Calu3 (cell line): ENCODE measurements at regions of chr9 and their contacts with region 1.

Region 1: DNA sequence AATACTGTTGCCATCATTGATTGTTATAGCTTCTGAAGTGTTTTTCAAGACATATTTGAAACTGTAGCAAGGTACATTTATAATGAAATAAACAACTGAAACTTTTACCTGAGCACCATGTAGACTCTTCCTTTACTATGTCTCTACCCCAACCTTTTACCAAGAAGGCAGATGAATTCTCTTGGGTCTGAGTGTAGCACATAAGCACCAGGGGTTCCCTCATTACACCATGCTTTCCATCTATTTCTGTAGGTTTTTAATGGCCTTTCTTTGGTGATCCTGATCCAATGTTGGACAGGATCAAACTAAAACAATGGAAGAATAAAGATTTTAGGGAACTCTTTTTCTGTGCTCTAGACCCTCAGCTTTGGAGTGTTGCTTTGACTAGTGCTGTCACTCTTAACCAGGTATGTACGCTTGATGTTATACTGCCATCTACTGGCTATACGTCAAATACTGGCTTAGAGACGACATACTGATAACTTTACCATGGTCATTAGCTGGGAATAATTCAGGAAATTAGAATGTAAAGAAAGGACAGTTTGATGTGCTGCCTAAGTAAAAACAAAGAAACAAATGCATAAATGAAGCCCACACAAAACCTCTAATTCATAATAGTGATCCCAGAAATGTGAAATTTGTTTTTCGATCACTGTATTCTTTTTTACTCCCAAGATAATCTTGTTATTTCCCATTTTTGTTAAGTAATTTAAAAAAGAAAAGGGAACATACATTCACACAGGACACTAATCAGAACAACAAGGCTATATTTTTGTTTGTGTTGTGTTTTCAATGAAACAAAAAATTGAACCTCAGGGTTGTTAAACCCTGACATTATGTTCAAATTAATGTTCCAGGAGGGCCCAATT is 30.7 kb downstream of the IFNW1 start:
- DNase-seq: peak; percentile 26
- H3K4me3 Mint-ChIP-seq: no peak overlapping the region
- H3K27ac Mint-ChIP-seq: no peak overlapping the region
- H3K4me1 Mint-ChIP-seq: no peaks in the 10 kb centered on the region
- H3K27me3 Mint-ChIP-seq: no peaks in the 10 kb centered on the region
- CTCF ChIP-seq: peak; percentile 42

Region 2: DNA sequence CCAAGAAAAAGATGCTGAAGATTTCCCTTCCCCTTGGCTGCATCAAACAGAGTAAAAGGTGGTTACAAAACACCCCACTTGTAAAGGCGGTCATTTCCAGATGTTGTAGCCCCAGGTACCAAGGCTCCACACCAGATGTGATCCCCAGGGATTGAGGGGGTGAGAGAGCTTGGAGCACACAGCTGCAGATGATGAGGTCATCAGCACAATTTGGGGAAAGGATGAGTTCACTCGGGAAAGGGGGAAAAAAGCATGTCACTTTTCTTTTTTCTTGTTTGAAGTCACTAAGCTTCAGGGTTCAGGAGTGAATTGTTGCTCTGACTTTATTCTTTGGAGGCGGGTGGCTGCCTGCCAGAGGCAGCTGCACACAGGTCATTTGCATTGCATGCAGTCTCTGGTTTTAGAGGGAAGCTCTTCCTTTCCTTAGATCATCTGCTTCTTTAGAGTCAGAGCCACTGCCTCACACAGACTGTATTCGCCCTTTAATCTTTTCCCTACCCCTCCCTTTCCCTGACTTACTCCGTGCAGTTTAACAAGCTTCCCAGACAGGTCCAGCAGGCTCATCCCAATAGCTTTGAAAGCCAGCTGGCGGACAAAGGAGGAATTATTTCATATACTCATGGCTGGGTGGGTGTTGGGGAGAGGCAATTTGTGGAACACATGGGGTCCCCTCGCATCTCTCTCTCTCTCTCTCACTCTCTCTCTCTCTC is 912.8 kb before region 1 on chr9:
- CTCF ChIA-PET with region 1: no interaction called
- intact Hi-C with region 1: loop called (anchors 10 kb)
- DNase-seq: no peak
- H3K4me3 Mint-ChIP-seq: no peak overlapping the region
- H3K27ac Mint-ChIP-seq: no peak overlapping the region
- H3K4me1 Mint-ChIP-seq: no peaks in the 10 kb centered on the region
- H3K27me3 Mint-ChIP-seq: peaks cover 16% of the 10 kb centered on the region
- CTCF ChIP-seq: no peak

Region 3: GRCh38 chr9:20884985-20885593 is 225.9 kb before region 1 on chr9:
- CTCF ChIA-PET with region 1: interaction called, 3 read pairs
- intact Hi-C with region 1: loop called (anchors 1 kb)
- DNase-seq: peak; percentile 54
- H3K4me3 Mint-ChIP-seq: no peak overlapping the region
- H3K27ac Mint-ChIP-seq: no peak overlapping the region
- H3K4me1 Mint-ChIP-seq: no peaks in the 10 kb centered on the region
- H3K27me3 Mint-ChIP-seq: no peaks in the 10 kb centered on the region
- CTCF ChIP-seq: peak; percentile 40

Region 4: GRCh38 chr9:21078717-21079116 is 32.2 kb before region 1 on chr9:
- CTCF ChIA-PET with region 1: interaction called, 36 read pairs
- intact Hi-C with region 1: loop called (anchors 1 kb)
- DNase-seq: no peak
- H3K4me3 Mint-ChIP-seq: no peak overlapping the region
- H3K27ac Mint-ChIP-seq: no peak overlapping the region
- H3K4me1 Mint-ChIP-seq: no peaks in the 10 kb centered on the region
- H3K27me3 Mint-ChIP-seq: no peaks in the 10 kb centered on the region
- CTCF ChIP-seq: no peak